CD8-positive, alpha-beta T cell (primary cell): ENCODE measurements at regions of chr9 and their contacts with region 1.

Region 1: GRCh38 chr9:93575796-93576257 is 557 bp upstream of the PHF2 start:
- DNase-seq: peak; percentile 21 to 77 (median 68)
- ATAC-seq: peak; percentile 61
- H3K4me3 ChIP-seq: peak overlapping the region; percentile 69 to 85
- H3K4me3 Mint-ChIP-seq: peak overlapping the region; percentile 90
- H3K27ac ChIP-seq: peak overlapping the region; percentile 67 to 80
- H3K27ac Mint-ChIP-seq: peak overlapping the region; percentile 94
- H3K4me1 ChIP-seq: peaks cover 28% of the 10 kb centered on the region
- H3K4me1 Mint-ChIP-seq: peaks cover 44% of the 10 kb centered on the region
- H3K27me3 ChIP-seq: no peaks in the 10 kb centered on the region
- H3K27me3 Mint-ChIP-seq: no peaks in the 10 kb centered on the region
- CTCF ChIP-seq: no peak

Region 2: GRCh38 chr9:92122800-92123199 is 1453.0 kb before region 1 on chr9:
- CTCF ChIA-PET with region 1: no interaction called
- POLR2A ChIA-PET with region 1: no interaction called
- intact Hi-C with region 1: loop called in 1 of 2 experiments (anchors 5 kb)
- DNase-seq: no peak
- ATAC-seq: no peak
- H3K4me3 ChIP-seq: no peak overlapping the region
- H3K4me3 Mint-ChIP-seq: no peak overlapping the region
- H3K27ac ChIP-seq: no peak overlapping the region
- H3K27ac Mint-ChIP-seq: no peak overlapping the region
- H3K4me1 ChIP-seq: no peaks in the 10 kb centered on the region
- H3K4me1 Mint-ChIP-seq: no peaks in the 10 kb centered on the region
- H3K27me3 ChIP-seq: no peaks in the 10 kb centered on the region
- H3K27me3 Mint-ChIP-seq: peaks cover 4% of the 10 kb centered on the region
- CTCF ChIP-seq: no peak

Region 3: GRCh38 chr9:93552923-93553322 is 22.9 kb before region 1 on chr9:
- CTCF ChIA-PET with region 1: no interaction called
- POLR2A ChIA-PET with region 1: no interaction called
- intact Hi-C with region 1: no loop called
- DNase-seq: no peak
- ATAC-seq: no peak
- H3K4me3 ChIP-seq: no peak overlapping the region
- H3K4me3 Mint-ChIP-seq: no peak overlapping the region
- H3K27ac ChIP-seq: no peak overlapping the region
- H3K27ac Mint-ChIP-seq: peak overlapping the region; percentile 33
- H3K4me1 ChIP-seq: no peaks in the 10 kb centered on the region
- H3K4me1 Mint-ChIP-seq: no peaks in the 10 kb centered on the region
- H3K27me3 ChIP-seq: no peaks in the 10 kb centered on the region
- H3K27me3 Mint-ChIP-seq: no peaks in the 10 kb centered on the region
- CTCF ChIP-seq: no peak

Region 4: GRCh38 chr9:94178927-94179326 is 603.1 kb after region 1 on chr9:
- CTCF ChIA-PET with region 1: no interaction called
- POLR2A ChIA-PET with region 1: no interaction called
- intact Hi-C with region 1: loop called in 1 of 2 experiments (anchors 10 kb)
- DNase-seq: no peak
- ATAC-seq: no peak
- H3K4me3 ChIP-seq: no peak overlapping the region
- H3K4me3 Mint-ChIP-seq: no peak overlapping the region
- H3K27ac ChIP-seq: no peak overlapping the region
- H3K27ac Mint-ChIP-seq: peak overlapping the region; percentile 52
- H3K4me1 ChIP-seq: peaks cover 22% of the 10 kb centered on the region
- H3K4me1 Mint-ChIP-seq: peaks cover 64% of the 10 kb centered on the region
- H3K27me3 ChIP-seq: no peaks in the 10 kb centered on the region
- H3K27me3 Mint-ChIP-seq: no peaks in the 10 kb centered on the region
- CTCF ChIP-seq: no peak

Region 5: DNA sequence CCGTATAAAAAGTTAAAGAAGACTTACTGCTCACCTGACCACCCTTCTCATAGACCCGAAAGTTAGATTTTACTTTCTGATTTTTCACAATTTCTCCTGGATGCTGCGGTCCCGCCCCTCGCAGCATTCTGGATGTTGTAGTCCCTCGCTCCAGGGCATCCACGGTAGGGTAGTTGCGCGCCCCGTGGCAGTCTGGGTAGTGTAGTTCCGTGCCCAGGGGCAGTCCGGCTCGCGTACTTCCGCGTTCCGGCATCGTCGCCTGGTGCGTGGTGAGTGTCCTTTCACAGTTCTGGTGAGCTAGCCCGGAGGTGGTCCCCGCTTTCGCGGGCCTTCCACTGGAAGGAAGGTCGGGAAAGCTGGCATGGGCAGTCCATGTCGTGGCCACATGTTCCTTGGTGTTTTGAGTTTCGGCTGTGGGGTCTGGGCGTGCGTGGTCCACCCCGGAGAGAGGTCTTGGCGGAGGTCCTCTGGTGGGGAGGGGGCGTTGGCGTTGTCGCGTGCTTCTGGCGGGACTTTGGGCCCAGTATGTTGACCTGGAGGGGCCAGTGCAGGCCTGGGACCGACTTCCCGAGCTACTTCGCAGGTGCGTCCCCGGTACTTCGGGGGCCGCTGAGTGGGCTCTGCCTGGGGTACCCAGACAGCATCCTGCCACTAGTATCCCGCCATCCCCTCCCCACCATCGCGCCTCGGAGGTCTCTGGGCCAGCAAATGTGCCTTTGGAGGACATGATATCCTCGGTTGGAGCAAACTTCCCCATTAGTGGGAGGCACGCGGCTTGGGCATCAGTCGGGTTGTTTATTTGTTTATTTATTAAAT is 683.5 kb after region 1 on chr9 and contains the start of gene ZNF169:
- CTCF ChIA-PET with region 1: no interaction called
- POLR2A ChIA-PET with region 1: no interaction called
- intact Hi-C with region 1: loop called in 1 of 2 experiments (anchors 10 kb)
- DNase-seq: peak; percentile 70 to 90 (median 85)
- ATAC-seq: peak; percentile 100
- H3K4me3 ChIP-seq: peak within 1 kb of the TSS; percentile 85 to 98
- H3K4me3 Mint-ChIP-seq: peak within 1 kb of the TSS; percentile 99
- H3K27ac ChIP-seq: peak within 1 kb of the TSS; percentile 54 to 75
- H3K27ac Mint-ChIP-seq: peak within 1 kb of the TSS; percentile 95
- H3K4me1 ChIP-seq: peaks cover 10% of the 10 kb centered on the region
- H3K4me1 Mint-ChIP-seq: peaks cover 38% of the 10 kb centered on the region
- H3K27me3 ChIP-seq: no peaks in the 10 kb centered on the region
- H3K27me3 Mint-ChIP-seq: peaks cover 5% of the 10 kb centered on the region
- CTCF ChIP-seq: no peak
- total RNA-seq, gene ZNF169: 3.3 to 6.4 TPM